AG04450 (cell line): ENCODE measurements at regions of chr7 and their contacts with region 1.

Region 1: DNA sequence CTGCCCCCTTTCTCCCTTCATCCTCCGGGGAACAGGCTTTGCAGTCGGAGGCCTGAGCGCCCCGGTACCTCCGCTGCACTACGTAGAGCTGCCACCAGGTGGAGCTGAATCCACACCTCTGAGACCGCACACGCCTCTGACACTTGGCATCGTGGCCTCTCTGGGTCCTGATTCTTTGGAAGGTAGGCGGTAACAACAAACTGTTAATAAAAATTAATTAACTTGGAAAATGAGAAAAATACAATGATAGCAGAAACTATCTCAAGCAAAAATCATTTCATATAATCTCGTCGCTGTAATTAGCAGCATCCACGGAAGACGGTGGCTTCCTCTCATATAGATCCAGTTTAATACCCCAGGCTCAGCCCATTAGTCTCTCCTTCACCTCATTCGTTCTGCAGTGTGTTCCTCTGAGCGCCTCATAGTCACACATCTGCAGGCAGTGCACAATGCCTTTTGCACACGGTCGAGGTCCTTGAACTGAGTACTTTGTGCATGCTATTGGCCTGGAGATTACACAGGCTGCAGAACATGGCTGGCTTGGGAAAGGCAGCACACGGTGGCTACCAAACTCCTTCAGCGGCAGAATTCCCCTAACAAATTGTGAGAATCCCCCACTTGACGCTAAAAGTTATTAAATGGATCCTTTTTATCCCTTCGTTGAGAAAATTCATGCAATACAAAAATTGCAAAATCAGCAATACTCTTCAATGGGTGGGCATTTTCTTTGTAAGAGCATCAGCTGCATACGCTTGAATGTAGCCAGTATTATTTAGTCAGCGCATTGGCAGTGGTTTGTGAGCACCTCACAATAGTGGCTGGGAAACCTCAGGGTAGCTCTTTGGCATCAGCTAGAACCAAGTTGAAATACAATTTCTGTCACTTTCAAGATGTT is 18.7 kb downstream of the OR9A2 start:
- DNase-seq: peak; percentile 6
- H3K4me3 ChIP-seq: no peak overlapping the region
- H3K27ac ChIP-seq: no peak overlapping the region
- H3K27me3 ChIP-seq: no peaks in the 10 kb centered on the region
- CTCF ChIP-seq: peak; percentile 94

Region 2: GRCh38 chr7:142992464-142992863 is 15.8 kb before region 1 on chr7:
- CTCF ChIA-PET with region 1: interaction called, 15 read pairs
- POLR2A ChIA-PET with region 1: no interaction called
- DNase-seq: no peak
- H3K4me3 ChIP-seq: no peak overlapping the region
- H3K27ac ChIP-seq: no peak overlapping the region
- H3K27me3 ChIP-seq: no peaks in the 10 kb centered on the region
- CTCF ChIP-seq: no peak

Region 3: GRCh38 chr7:142997456-142997989 is 10.7 kb before region 1 on chr7:
- CTCF ChIA-PET with region 1: interaction called, 15 read pairs
- POLR2A ChIA-PET with region 1: no interaction called
- DNase-seq: no peak
- H3K4me3 ChIP-seq: no peak overlapping the region
- H3K27ac ChIP-seq: no peak overlapping the region
- H3K27me3 ChIP-seq: no peaks in the 10 kb centered on the region
- CTCF ChIP-seq: no peak

Region 4: DNA sequence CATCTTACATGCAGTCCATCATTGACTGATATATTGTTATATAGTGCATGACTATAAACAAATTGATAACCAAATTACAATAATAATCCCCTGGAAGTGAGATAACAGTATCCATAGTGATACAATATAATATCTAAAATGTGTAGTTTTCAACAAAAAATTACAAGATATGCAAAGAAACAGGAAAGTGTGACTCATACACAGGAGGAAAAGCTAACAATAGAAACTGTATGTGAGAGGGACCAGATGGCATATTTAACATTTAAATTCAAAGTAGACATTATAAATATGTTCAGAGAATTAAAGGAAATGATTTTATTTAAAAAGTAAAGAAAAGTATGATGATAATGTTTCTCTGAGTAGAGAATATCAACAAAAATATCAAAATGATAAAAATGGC is 10.7 kb after region 1 on chr7:
- CTCF ChIA-PET with region 1: interaction called, 11 read pairs
- POLR2A ChIA-PET with region 1: no interaction called
- DNase-seq: no peak
- H3K4me3 ChIP-seq: no peak overlapping the region
- H3K27ac ChIP-seq: no peak overlapping the region
- H3K27me3 ChIP-seq: no peaks in the 10 kb centered on the region
- CTCF ChIP-seq: no peak